ENCODE measurements at regions of chr12 and their contacts with region 1.

Region 1: DNA sequence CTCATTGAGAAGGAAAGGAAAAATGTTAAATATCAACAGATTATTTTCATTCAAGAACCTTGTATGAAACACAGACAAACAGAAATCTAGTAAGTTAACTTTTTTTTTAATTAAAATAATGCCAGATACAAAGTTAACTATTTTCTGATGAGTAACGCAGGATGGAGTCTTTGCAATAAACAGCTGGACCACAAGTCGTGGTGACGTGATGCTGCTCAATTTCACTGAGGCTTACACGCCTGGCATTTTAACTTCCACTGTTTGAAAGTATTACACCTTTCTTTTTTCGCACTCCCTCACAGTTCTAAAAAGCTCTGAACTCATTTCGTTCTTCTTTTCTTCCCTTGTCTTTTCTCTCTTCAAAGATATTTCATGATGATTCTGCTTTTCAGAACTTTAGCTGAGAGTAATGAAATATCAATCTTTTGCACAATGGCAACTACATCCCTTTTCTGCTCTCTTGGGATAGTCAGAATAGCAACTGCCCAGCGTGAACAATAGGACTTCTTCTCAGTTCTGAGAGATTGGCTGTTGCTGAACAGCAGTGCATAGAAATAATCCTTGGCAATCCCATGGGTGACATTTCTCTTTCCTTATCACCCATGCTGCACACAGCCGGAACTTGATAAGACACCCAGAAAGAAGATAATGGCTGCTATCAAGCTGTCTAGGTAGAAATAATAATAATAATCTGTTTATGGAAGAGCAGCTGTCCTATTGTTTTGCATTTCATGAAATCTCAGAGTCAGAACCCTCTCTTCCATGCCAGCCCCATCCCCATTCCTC is 160.5 kb downstream of the BTG1 start:
- DNase-seq: peak in 4 of 9 experiments; percentile 20 to 48 (median 27)
- ATAC-seq: peak; percentile 62
- H3K4me3 ChIP-seq: no peak overlapping the region
- H3K4me3 Mint-ChIP-seq: peak overlapping the region; percentile 32
- H3K27ac ChIP-seq: no peak overlapping the region
- H3K27ac Mint-ChIP-seq: peak overlapping the region; percentile 78
- H3K4me1 ChIP-seq: peaks cover 20% of the 10 kb centered on the region
- H3K4me1 Mint-ChIP-seq: peaks cover 59% of the 10 kb centered on the region
- H3K27me3 ChIP-seq: no peaks in the 10 kb centered on the region
- H3K27me3 Mint-ChIP-seq: no peaks in the 10 kb centered on the region
- CTCF ChIP-seq: no peak

Region 2: DNA sequence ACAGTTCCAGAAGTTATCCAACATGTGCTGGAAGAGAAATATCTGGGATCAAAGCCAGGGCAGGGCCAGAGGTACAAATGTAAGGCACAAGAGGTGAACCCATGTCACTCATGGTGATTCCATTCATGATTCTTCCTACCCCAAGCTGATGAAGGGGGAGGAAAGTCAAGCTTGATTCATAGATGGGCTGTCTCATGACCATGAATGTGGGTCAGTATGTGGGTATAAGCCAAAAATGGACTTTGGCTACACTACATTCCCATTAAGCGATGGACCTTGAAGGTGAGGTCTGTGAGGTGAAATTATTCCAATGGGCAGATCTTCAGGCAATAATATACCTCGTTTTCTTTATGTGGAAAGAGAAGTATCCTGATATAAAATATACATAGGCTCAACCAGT is 56.7 kb before region 1 on chr12:
- CTCF ChIA-PET with region 1: no interaction called
- POLR2A ChIA-PET with region 1: no interaction called
- intact Hi-C with region 1: no loop called
- DNase-seq: no peak
- ATAC-seq: no peak
- H3K4me3 ChIP-seq: no peak overlapping the region
- H3K4me3 Mint-ChIP-seq: no peak overlapping the region
- H3K27ac ChIP-seq: no peak overlapping the region
- H3K27ac Mint-ChIP-seq: no peak overlapping the region
- H3K4me1 ChIP-seq: no peaks in the 10 kb centered on the region
- H3K4me1 Mint-ChIP-seq: peaks cover 8% of the 10 kb centered on the region
- H3K27me3 ChIP-seq: no peaks in the 10 kb centered on the region
- H3K27me3 Mint-ChIP-seq: no peaks in the 10 kb centered on the region
- CTCF ChIP-seq: no peak

Region 3: DNA sequence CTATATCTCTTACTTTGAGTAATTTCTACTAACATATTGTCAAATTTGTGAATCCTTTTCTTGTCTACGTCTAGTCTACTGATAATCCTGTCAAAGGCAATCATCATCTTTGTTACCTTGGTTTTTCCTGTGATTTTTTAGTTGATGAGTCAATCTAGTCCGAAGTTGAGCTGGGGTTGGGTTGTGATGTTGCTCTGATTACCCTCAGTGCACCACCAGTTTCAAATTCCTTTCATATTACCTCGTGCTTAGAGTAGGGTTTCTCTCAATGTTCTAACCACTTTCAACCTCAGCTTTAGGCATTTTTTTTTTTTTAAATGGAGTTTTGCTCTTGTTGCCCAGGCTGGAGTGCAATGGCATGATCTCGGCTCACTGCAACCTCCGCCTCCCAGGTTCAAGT is 26.4 kb before region 1 on chr12:
- CTCF ChIA-PET with region 1: no interaction called
- POLR2A ChIA-PET with region 1: no interaction called
- intact Hi-C with region 1: no loop called
- DNase-seq: no peak
- ATAC-seq: no peak
- H3K4me3 ChIP-seq: no peak overlapping the region
- H3K4me3 Mint-ChIP-seq: no peak overlapping the region
- H3K27ac ChIP-seq: no peak overlapping the region
- H3K27ac Mint-ChIP-seq: no peak overlapping the region
- H3K4me1 ChIP-seq: no peaks in the 10 kb centered on the region
- H3K4me1 Mint-ChIP-seq: peaks cover 4% of the 10 kb centered on the region
- H3K27me3 ChIP-seq: no peaks in the 10 kb centered on the region
- H3K27me3 Mint-ChIP-seq: no peaks in the 10 kb centered on the region
- CTCF ChIP-seq: no peak

Region 4: DNA sequence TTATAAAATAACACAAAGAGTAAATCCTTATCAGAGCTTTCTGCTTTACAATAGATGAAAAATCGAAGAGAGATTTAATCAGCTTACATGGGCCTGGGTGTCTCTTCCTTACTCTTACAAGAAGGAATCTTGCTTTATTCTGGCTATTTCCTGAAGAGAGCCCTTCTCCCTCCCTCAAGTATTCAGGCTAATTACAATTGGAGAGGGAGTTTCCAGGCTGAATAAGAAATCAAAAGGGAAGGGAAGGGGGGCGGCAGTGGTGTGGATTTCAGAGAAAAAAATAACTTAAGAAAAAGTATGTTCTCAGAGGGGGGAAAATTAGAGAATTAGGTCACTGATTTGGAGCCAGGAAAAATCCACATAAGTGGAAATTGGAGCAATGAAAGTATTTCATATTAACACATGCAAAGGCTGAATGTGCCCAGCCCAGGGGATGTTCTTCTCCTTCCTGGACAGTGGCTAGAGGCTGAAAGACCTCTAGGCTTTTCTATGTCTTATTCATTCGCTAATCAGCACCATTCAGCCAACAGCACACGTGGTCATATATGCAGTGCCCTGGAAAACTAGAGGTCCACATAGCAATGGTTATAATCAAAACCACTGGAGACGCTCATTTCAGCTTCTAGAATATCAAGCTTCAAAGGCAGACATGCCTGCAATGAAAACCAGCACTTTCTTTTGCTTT is 319.3 kb after region 1 on chr12:
- CTCF ChIA-PET with region 1: no interaction called
- POLR2A ChIA-PET with region 1: no interaction called
- intact Hi-C with region 1: no loop called
- DNase-seq: no peak
- ATAC-seq: no peak
- H3K4me3 ChIP-seq: no peak overlapping the region
- H3K4me3 Mint-ChIP-seq: no peak overlapping the region
- H3K27ac ChIP-seq: no peak overlapping the region
- H3K27ac Mint-ChIP-seq: no peak overlapping the region
- H3K4me1 ChIP-seq: peaks cover 5% of the 10 kb centered on the region
- H3K4me1 Mint-ChIP-seq: peaks cover 10% of the 10 kb centered on the region
- H3K27me3 ChIP-seq: no peaks in the 10 kb centered on the region
- H3K27me3 Mint-ChIP-seq: no peaks in the 10 kb centered on the region
- CTCF ChIP-seq: no peak

Region 5: GRCh38 chr12:92585115-92585727 is 600.0 kb after region 1 on chr12:
- CTCF ChIA-PET with region 1: no interaction called
- POLR2A ChIA-PET with region 1: no interaction called
- intact Hi-C with region 1: loop called in 1 of 2 experiments (anchors 5 kb)
- DNase-seq: no peak
- ATAC-seq: no peak
- H3K4me3 ChIP-seq: no peak overlapping the region
- H3K4me3 Mint-ChIP-seq: no peak overlapping the region
- H3K27ac ChIP-seq: no peak overlapping the region
- H3K27ac Mint-ChIP-seq: no peak overlapping the region
- H3K4me1 ChIP-seq: no peaks in the 10 kb centered on the region
- H3K4me1 Mint-ChIP-seq: no peaks in the 10 kb centered on the region
- H3K27me3 ChIP-seq: no peaks in the 10 kb centered on the region
- H3K27me3 Mint-ChIP-seq: no peaks in the 10 kb centered on the region
- CTCF ChIP-seq: no peak